ENCODE measurements at regions of chr22 and their contacts with region 1.

Region 1: DNA sequence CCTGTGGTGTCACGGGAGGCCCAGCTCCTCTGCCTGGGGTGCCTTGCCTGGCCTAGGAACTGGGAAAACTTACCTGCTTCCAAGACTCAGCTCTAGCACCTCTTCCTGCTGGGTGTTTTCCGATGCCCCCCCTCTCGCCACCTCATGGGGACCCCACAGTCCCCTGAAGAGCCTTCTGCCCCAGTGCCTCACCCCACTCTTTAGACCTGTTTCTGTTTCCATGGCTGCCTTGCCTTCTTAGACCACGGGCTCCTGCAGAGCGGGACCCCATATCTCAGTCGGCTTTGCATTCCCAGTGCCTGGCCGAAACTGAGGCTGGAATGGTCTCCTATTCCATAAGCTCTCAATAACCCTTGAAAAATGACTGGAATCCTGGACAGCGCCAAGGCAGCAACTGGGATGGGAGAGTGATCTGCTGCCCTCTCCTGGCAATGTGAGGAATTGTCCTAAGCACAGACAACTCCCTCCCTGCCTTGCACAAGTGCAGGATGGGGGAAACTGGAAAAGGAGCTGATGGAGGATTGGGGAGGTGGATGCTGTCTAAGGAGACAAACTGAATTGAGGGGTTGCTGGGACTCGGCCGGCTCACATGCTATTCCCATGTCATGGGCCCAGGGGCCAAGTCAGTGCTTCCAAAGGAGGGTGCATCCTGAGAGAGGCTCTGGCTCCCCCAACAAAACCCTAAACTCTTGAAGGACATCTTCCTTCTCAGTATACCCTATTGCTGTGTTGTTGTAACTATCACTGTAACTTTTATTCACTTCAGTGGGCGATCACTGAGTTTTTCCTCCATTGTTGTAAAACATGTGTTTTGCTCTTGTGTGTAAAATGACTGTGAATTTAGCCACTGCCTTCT is 26.6 kb upstream of the IL17RA start:
- DNase-seq: peak; percentile 46
- H3K4me3 ChIP-seq: no peak overlapping the region
- H3K27ac ChIP-seq: no peak overlapping the region
- H3K27me3 ChIP-seq: peaks cover 5% of the 10 kb centered on the region
- CTCF ChIP-seq: peak; percentile 97

Region 2: GRCh38 chr22:16917144-16918003 is 140.8 kb before region 1 on chr22:
- CTCF ChIA-PET with region 1: interaction called, 29 read pairs
- POLR2A ChIA-PET with region 1: no interaction called
- DNase-seq: no peak
- H3K4me3 ChIP-seq: no peak overlapping the region
- H3K27ac ChIP-seq: no peak overlapping the region
- H3K27me3 ChIP-seq: no peaks in the 10 kb centered on the region
- CTCF ChIP-seq: peak; percentile 37

Region 3: DNA sequence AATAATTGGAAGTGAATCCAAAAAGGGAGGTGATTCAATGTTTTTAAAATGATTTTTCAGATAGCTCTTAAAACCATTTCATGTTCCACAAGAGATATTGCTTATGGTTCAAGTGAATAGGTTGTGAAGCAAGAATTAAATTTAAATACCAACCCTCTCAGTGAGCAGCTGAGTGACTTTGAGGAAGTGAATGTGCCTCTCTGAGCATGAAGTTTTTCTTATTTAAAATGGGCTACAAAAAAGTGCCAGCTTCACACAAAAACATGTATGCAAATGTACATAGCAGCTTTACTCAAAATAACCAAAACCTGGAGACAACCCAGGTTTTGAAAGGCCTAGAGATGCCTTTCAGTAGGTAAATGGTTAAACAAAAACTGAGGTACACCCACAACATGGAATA is 14.7 kb before region 1 on chr22:
- CTCF ChIA-PET with region 1: interaction called, 13 read pairs
- POLR2A ChIA-PET with region 1: no interaction called
- DNase-seq: no peak
- H3K4me3 ChIP-seq: no peak overlapping the region
- H3K27ac ChIP-seq: no peak overlapping the region
- H3K27me3 ChIP-seq: no peaks in the 10 kb centered on the region
- CTCF ChIP-seq: no peak

Region 4: DNA sequence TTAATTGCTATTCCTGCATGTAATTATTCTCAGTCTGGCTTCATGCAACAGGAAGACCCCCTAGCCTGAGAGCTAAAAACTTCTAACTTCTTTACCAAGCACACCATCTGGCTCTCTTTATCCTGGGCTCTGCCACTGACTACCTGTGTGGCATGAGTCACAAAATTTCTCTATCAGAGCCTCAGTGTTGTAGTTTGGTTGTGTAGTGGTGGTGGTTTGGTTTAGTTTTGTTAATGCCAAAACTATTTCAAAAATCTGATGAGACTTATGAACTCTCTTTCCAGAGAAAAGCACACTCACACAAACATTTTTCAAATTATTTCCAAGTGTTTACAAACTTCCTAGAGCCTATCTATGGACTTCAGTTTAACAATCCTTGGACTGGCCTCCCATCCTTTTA is 19.1 kb after region 1 on chr22:
- CTCF ChIA-PET with region 1: interaction called, 18 read pairs
- POLR2A ChIA-PET with region 1: no interaction called
- DNase-seq: peak; percentile 51
- H3K4me3 ChIP-seq: no peak overlapping the region
- H3K27ac ChIP-seq: peak overlapping the region; percentile 39
- H3K27me3 ChIP-seq: no peaks in the 10 kb centered on the region
- CTCF ChIP-seq: no peak

Region 5: GRCh38 chr22:17131686-17132085 is 73.5 kb after region 1 on chr22:
- CTCF ChIA-PET with region 1: no interaction called
- POLR2A ChIA-PET with region 1: no interaction called
- DNase-seq: no peak
- H3K4me3 ChIP-seq: no peak overlapping the region
- H3K27ac ChIP-seq: no peak overlapping the region
- H3K27me3 ChIP-seq: no peaks in the 10 kb centered on the region
- CTCF ChIP-seq: no peak

Region 6: DNA sequence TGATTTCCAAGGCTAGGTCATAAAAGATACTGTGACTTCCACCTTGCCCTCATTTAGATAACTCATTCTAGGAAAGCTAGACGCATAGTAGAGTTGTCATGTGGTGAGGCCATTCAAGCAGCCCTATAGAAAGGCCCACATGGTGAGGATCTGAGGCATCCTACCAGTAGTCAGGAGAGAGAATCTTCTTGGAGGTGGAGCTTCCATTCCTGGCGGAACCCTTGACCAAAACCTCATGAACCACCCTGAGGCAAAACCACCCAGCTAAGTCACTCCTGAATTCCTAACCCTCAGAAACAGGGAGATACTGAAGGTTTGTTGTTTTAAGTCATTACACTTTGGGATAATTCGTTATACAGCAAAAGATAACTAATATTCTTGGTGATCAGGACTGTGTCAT is 103.8 kb after region 1 on chr22:
- CTCF ChIA-PET with region 1: no interaction called
- POLR2A ChIA-PET with region 1: no interaction called
- DNase-seq: no peak
- H3K4me3 ChIP-seq: no peak overlapping the region
- H3K27ac ChIP-seq: no peak overlapping the region
- H3K27me3 ChIP-seq: peaks cover 2% of the 10 kb centered on the region
- CTCF ChIP-seq: no peak

Region 7: GRCh38 chr22:17501679-17502285 is 443.6 kb after region 1 on chr22:
- CTCF ChIA-PET with region 1: interaction called, 15 read pairs
- POLR2A ChIA-PET with region 1: no interaction called
- DNase-seq: peak; percentile 27
- H3K4me3 ChIP-seq: no peak overlapping the region
- H3K27ac ChIP-seq: no peak overlapping the region
- H3K27me3 ChIP-seq: no peaks in the 10 kb centered on the region
- CTCF ChIP-seq: peak; percentile 69

Measured in AG04450 (cell line).